HepG2 (cell line): ENCODE measurements at regions of chr10 and their contacts with region 1.

Region 1: DNA sequence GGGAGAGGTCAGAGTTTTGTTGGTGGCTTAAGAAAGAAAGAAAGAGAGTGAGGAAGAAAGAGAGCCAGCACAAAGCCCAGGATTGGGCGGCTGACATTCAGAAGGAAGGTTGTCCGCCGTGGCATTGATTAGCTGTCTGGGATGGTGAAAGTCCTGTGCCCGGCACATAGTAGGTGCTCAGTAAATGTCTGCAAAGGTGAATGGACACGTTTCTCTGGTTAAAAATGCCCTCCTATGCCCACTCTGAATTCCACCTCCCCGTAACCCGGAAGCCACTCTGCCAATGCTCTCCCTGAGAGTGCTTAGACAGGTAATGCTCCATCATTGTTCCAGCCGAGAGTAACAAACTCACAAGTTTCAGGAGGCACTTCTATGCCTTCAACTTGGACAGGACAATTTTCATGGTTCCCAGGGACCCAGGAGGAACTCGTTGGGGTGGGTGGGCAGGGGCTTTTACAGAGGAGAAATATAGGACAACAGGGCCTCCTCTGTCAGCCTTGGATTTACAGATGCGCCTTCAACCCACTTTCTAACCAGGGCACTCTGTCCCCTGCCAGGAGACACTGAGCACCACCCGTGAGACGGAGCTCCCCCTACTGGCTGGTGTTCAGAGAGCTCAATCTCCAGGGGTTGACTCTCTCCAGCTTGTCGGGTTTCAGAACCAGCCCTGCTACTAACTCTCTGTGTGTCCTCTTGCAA is 411.5 kb upstream of the ZMIZ1 start:
- DNase-seq: peak; percentile 79
- ATAC-seq: peak; percentile 97
- H3K4me3 ChIP-seq: peak overlapping the region; percentile 26 to 65 (median 38)
- H3K27ac ChIP-seq: peak overlapping the region; percentile 80
- H3K4me1 ChIP-seq: peaks cover 35% of the 10 kb centered on the region
- H3K27me3 ChIP-seq: no peaks in the 10 kb centered on the region
- CTCF ChIP-seq: peak; percentile 92
- EP300 ChIP-seq: no peak
- POLR2A ChIP-seq: no peak
- RAD21 ChIP-seq: peak; percentile 90

Region 2: GRCh38 chr10:78047314-78047891 is 609.9 kb before region 1 on chr10:
- CTCF ChIA-PET with region 1: interaction called, 3 read pairs
- POLR2A ChIA-PET with region 1: interaction called, 3 read pairs
- in situ Hi-C with region 1: no loop called
- intact Hi-C with region 1: loop called (anchors 1 kb)
- DNase-seq: peak; percentile 79
- ATAC-seq: peak; percentile 70
- H3K4me3 ChIP-seq: no peak overlapping the region
- H3K27ac ChIP-seq: no peak overlapping the region
- H3K4me1 ChIP-seq: peaks cover 28% of the 10 kb centered on the region
- H3K27me3 ChIP-seq: no peaks in the 10 kb centered on the region
- CTCF ChIP-seq: peak; percentile 96
- EP300 ChIP-seq: no peak
- POLR2A ChIP-seq: no peak
- RAD21 ChIP-seq: peak; percentile 83

Region 3: DNA sequence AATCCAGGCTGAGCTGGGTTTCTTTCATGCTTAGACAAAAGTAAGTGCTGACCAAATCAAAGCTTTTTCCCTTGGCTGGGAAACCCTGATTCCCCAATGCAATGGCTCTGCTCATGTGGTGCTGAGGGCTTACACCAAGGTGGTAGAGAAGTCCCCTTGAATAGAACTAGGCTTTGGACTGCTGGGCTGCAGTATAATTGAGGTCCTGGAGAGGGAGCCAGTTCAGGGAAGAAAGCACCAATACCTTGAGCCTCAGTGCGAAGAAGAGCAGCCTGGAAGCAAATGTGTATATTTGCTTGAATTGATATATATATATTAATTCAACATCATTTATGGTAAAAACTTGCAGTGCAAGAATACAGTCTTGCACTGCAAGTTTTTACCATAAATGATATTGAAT is 232.6 kb before region 1 on chr10:
- CTCF ChIA-PET with region 1: interaction called, 6 read pairs
- POLR2A ChIA-PET with region 1: no interaction called
- in situ Hi-C with region 1: no loop called
- intact Hi-C with region 1: loop called (anchors 1 kb)
- DNase-seq: peak; percentile 48
- ATAC-seq: peak; percentile 91
- H3K4me3 ChIP-seq: no peak overlapping the region
- H3K27ac ChIP-seq: no peak overlapping the region
- H3K4me1 ChIP-seq: no peaks in the 10 kb centered on the region
- H3K27me3 ChIP-seq: peaks cover 5 to 30% of the 10 kb centered on the region in 2 experiments; a peak in 4 of 5 replicates
- CTCF ChIP-seq: peak; percentile 74
- EP300 ChIP-seq: no peak
- POLR2A ChIP-seq: no peak
- RAD21 ChIP-seq: 0 out of 2 replicates have a peak, but pooled peaks have one; percentile 20

Region 4: GRCh38 chr10:78432583-78432982 is 224.7 kb before region 1 on chr10:
- CTCF ChIA-PET with region 1: interaction called, 8 read pairs
- POLR2A ChIA-PET with region 1: interaction called, 5 read pairs
- in situ Hi-C with region 1: no loop called
- intact Hi-C with region 1: loop called (anchors 1 kb)
- DNase-seq: peak; percentile 39
- ATAC-seq: peak; percentile 95
- H3K4me3 ChIP-seq: no peak overlapping the region
- H3K27ac ChIP-seq: no peak overlapping the region
- H3K4me1 ChIP-seq: peaks cover 22% of the 10 kb centered on the region
- H3K27me3 ChIP-seq: no peaks in the 10 kb centered on the region
- CTCF ChIP-seq: peak; percentile 77
- EP300 ChIP-seq: no peak
- POLR2A ChIP-seq: no peak
- RAD21 ChIP-seq: peak; percentile 68

Region 5: DNA sequence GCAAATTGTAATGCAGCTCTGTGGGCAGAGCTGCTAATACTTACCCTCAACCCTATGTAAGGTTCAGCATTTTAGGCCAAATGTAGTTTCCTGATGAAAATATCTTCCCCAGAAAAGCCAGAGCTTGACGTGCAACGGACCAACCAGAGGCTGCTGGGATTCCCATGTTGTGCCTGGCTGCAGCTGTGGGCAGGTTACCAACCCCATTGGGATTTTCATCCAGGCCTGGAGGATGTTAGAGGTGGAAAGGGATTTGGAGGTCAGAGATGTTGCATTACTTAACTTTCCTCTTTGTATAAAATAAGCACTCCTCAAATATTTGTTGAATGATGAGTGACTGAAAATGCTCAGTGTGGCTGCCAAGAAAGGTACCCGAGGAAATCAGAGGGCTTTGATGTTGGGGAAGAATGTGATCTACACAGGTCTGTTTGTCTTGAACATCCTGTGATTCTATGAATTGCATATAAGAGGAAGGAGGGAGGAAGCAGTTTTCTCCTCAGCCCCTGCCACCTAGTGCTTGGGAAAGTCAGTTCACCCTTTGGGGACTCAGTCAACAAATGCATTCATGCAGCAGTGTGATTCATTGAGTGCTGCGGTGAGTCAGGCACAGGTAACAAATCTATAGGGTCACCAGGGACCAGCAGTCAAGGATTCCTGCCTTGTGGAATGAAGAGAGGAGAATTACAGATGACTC is 136.4 kb before region 1 on chr10:
- CTCF ChIA-PET with region 1: no interaction called
- POLR2A ChIA-PET with region 1: no interaction called
- in situ Hi-C with region 1: no loop called
- intact Hi-C with region 1: loop called (anchors 2 kb)
- DNase-seq: peak; percentile 96
- ATAC-seq: peak; percentile 97
- H3K4me3 ChIP-seq: no peak overlapping the region
- H3K27ac ChIP-seq: no peak overlapping the region
- H3K4me1 ChIP-seq: peaks cover 51% of the 10 kb centered on the region
- H3K27me3 ChIP-seq: no peaks in the 10 kb centered on the region
- CTCF ChIP-seq: peak; percentile 75
- EP300 ChIP-seq: peak in 1 of 2 experiments; percentile 72; a peak in 2 of 4 replicates
- POLR2A ChIP-seq: no peak
- RAD21 ChIP-seq: peak; percentile 67; the same call in 1 of the 2 replicates

Region 6: DNA sequence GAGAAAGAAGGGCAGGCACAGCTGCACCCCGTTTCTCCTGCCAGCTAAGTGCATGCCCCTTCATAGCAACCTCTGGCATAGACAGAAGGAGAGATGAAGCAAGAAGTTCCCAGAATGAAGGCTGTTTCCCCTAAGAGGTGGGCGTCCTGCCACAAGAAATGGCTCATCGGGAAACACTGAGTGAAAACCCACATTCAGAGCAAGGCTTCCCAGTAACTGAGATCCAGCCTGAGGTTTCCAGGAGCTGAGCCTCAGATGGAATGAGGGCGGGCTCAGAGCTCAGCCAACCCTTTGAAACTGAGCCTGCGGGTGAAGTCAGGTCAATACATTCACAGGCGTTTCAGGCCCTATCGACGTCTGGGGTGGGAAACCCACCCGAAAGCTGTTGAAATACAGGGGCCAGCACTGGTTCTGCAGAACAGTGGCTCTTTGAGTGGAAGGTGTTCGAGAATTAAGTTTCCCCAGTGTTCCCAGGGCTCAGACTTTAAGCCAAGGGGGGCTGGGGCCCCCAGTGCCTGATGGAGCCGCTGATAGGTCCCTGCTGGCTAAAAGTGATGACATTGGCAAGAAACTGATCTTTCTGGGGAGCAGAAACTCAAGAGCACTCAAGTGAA is 113.5 kb before region 1 on chr10:
- CTCF ChIA-PET with region 1: interaction called, 3 read pairs
- POLR2A ChIA-PET with region 1: no interaction called
- in situ Hi-C with region 1: no loop called
- intact Hi-C with region 1: loop called (anchors 5 kb)
- DNase-seq: peak; percentile 62
- ATAC-seq: peak; percentile 87
- H3K4me3 ChIP-seq: peak overlapping the region in 1 of 3 experiments; percentile 11; a peak in 2 of 6 replicates
- H3K27ac ChIP-seq: peak overlapping the region; percentile 58
- H3K4me1 ChIP-seq: peaks cover 86% of the 10 kb centered on the region
- H3K27me3 ChIP-seq: no peaks in the 10 kb centered on the region
- CTCF ChIP-seq: no peak
- EP300 ChIP-seq: no peak
- POLR2A ChIP-seq: peak; percentile 7 to 16; a peak in 1 of 4 replicates
- RAD21 ChIP-seq: no peak

Region 7: DNA sequence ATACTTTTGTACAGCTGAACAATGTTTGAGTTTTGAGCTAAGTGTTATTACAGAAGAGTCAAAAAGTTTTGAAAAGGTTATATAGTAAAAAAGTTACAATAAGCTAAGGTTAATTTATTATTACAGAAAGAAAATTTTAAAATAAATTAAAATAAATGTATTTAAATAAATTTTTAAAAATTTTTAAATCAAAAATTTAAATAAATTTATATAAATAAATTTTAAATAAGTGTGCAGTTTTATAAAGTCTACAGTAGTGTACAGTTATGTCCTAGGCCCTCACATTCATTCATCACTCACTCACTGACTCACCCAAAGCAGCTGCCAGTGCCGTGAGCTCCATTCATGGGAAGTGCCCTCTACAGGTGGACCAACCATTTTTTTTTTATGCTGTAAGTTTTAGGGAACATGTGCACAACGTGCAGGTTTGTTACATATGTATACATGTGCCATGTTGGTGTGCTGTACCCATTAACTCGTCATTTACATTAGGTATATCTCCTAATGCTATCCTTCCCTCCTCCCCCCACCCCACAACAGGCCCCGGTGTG is 51.4 kb before region 1 on chr10:
- CTCF ChIA-PET with region 1: no interaction called
- POLR2A ChIA-PET with region 1: no interaction called
- in situ Hi-C with region 1: no loop called
- intact Hi-C with region 1: no loop called
- DNase-seq: peak; percentile 55
- ATAC-seq: peak; percentile 73
- H3K4me3 ChIP-seq: no peak overlapping the region
- H3K27ac ChIP-seq: no peak overlapping the region
- H3K4me1 ChIP-seq: no peaks in the 10 kb centered on the region
- H3K27me3 ChIP-seq: peaks cover 2 to 3% of the 10 kb centered on the region in 2 experiments; a peak in 4 of 5 replicates
- CTCF ChIP-seq: peak; percentile 46
- EP300 ChIP-seq: no peak
- POLR2A ChIP-seq: no peak
- RAD21 ChIP-seq: no peak

Region 8: DNA sequence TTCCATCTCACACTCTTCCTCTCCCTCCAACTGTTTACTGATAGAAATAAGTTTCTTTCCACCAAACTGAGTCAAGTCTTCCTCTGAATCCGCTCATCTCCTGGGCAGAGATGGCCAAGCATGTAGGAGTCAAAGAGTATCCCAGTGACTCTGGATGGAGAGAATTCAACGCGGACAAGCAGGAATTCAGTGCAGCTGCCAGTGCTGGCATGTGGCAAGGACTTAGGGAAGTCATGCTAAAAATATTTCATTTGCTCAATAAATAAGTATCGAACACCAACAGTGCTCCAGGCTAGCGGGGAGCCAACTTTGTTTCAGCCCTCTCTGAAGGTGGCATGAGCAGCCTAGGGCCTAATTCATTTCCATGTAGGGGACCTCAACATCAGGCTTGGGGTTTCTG is 59.9 kb after region 1 on chr10:
- CTCF ChIA-PET with region 1: no interaction called
- POLR2A ChIA-PET with region 1: no interaction called
- in situ Hi-C with region 1: no loop called
- intact Hi-C with region 1: no loop called
- DNase-seq: no peak
- ATAC-seq: no peak
- H3K4me3 ChIP-seq: no peak overlapping the region
- H3K27ac ChIP-seq: no peak overlapping the region
- H3K4me1 ChIP-seq: no peaks in the 10 kb centered on the region
- H3K27me3 ChIP-seq: no peaks in the 10 kb centered on the region
- CTCF ChIP-seq: no peak
- EP300 ChIP-seq: no peak
- POLR2A ChIP-seq: no peak
- RAD21 ChIP-seq: no peak

Region 9: DNA sequence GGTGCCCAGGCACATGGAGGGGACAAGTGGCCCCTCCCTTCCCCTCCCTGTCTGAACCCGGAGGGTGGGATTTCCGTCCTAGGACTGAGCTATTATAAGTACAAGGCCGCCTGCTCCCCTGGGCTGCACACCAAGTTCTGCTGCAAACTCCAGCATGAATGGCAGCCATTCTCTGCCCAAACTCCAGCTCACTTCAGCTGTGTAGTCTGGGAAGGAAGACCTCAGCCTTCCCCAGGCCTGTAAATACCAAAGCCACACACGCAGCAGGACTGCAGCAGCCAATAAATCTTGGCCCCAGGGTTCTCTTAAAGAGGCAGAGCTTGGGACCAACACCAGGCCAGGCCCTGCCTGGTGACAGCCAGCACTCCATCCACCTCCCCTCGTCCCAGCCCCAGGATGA is 120.2 kb after region 1 on chr10:
- CTCF ChIA-PET with region 1: no interaction called
- POLR2A ChIA-PET with region 1: no interaction called
- in situ Hi-C with region 1: no loop called
- intact Hi-C with region 1: loop called (anchors 10 kb)
- DNase-seq: no peak
- ATAC-seq: no peak
- H3K4me3 ChIP-seq: no peak overlapping the region
- H3K27ac ChIP-seq: no peak overlapping the region
- H3K4me1 ChIP-seq: peaks cover 36% of the 10 kb centered on the region
- H3K27me3 ChIP-seq: no peaks in the 10 kb centered on the region; a peak in 2 of 5 replicates
- CTCF ChIP-seq: no peak
- EP300 ChIP-seq: no peak
- POLR2A ChIP-seq: no peak
- RAD21 ChIP-seq: no peak

Region 10: GRCh38 chr10:78913219-78914059 is 256.1 kb after region 1 on chr10:
- CTCF ChIA-PET with region 1: no interaction called
- POLR2A ChIA-PET with region 1: no interaction called
- in situ Hi-C with region 1: no loop called
- intact Hi-C with region 1: no loop called
- DNase-seq: peak; percentile 86
- ATAC-seq: peak; percentile 94
- H3K4me3 ChIP-seq: peak overlapping the region in 1 of 3 experiments; percentile 27; a peak in 1 of 6 replicates
- H3K27ac ChIP-seq: no peak overlapping the region
- H3K4me1 ChIP-seq: peaks cover 47% of the 10 kb centered on the region
- H3K27me3 ChIP-seq: peaks cover 2 to 43% of the 10 kb centered on the region in 2 experiments; a peak in 4 of 5 replicates
- CTCF ChIP-seq: no peak; the same call in 1 of the 2 replicates
- EP300 ChIP-seq: 0 out of 4 replicates have a peak, but pooled peaks of 1 of the 2 experiments have one; percentile 40
- POLR2A ChIP-seq: no peak
- RAD21 ChIP-seq: no peak